ENCODE measurements at regions of chr3 and their contacts with region 1.

Region 1: GRCh38 chr3:179322286-179323196 is at the start of gene ZNF639:
- DNase-seq: peak; percentile 73 to 95 (median 80)
- ATAC-seq: peak; percentile 84
- H3K4me3 ChIP-seq: peak within 1 kb of the TSS; percentile 72
- H3K4me3 Mint-ChIP-seq: peak within 1 kb of the TSS; percentile 92
- H3K27ac ChIP-seq: peak within 1 kb of the TSS; percentile 76 to 97
- H3K27ac Mint-ChIP-seq: peak within 1 kb of the TSS; percentile 98
- H3K4me1 ChIP-seq: peaks cover 25% of the 10 kb centered on the region
- H3K4me1 Mint-ChIP-seq: peaks cover 37% of the 10 kb centered on the region
- H3K27me3 ChIP-seq: no peaks in the 10 kb centered on the region
- H3K27me3 Mint-ChIP-seq: no peaks in the 10 kb centered on the region
- CTCF ChIP-seq: peak; percentile 73
- total RNA-seq, gene ZNF639: 88.1 to 90.8 TPM

Region 2: GRCh38 chr3:178436773-178437172 is 885.8 kb before region 1 on chr3:
- CTCF ChIA-PET with region 1: no interaction called
- POLR2A ChIA-PET with region 1: no interaction called
- intact Hi-C with region 1: loop called (anchors 2 to 5 kb)
- DNase-seq: peak in 3 of 14 experiments; percentile 9 to 14 (median 13)
- ATAC-seq: no peak
- H3K4me3 ChIP-seq: no peak overlapping the region
- H3K4me3 Mint-ChIP-seq: no peak overlapping the region
- H3K27ac ChIP-seq: no peak overlapping the region
- H3K27ac Mint-ChIP-seq: no peak overlapping the region
- H3K4me1 ChIP-seq: no peaks in the 10 kb centered on the region
- H3K4me1 Mint-ChIP-seq: no peaks in the 10 kb centered on the region
- H3K27me3 ChIP-seq: no peaks in the 10 kb centered on the region
- H3K27me3 Mint-ChIP-seq: peaks cover 4% of the 10 kb centered on the region
- CTCF ChIP-seq: peak; percentile 47

Region 3: GRCh38 chr3:179037351-179037750 is 285.2 kb before region 1 on chr3:
- CTCF ChIA-PET with region 1: no interaction called
- POLR2A ChIA-PET with region 1: interaction called, 10 read pairs
- intact Hi-C with region 1: no loop called
- DNase-seq: peak; percentile 27 to 78 (median 55)
- ATAC-seq: peak; percentile 95
- H3K4me3 ChIP-seq: peak overlapping the region; percentile 28
- H3K4me3 Mint-ChIP-seq: peak overlapping the region; percentile 73
- H3K27ac ChIP-seq: peak overlapping the region; percentile 47 to 63
- H3K27ac Mint-ChIP-seq: no peak overlapping the region
- H3K4me1 ChIP-seq: peaks cover 28% of the 10 kb centered on the region
- H3K4me1 Mint-ChIP-seq: peaks cover 12% of the 10 kb centered on the region
- H3K27me3 ChIP-seq: no peaks in the 10 kb centered on the region
- H3K27me3 Mint-ChIP-seq: no peaks in the 10 kb centered on the region
- CTCF ChIP-seq: no peak

Region 4: GRCh38 chr3:179299999-179300613 is 22.4 kb before region 1 on chr3:
- CTCF ChIA-PET with region 1: no interaction called
- POLR2A ChIA-PET with region 1: no interaction called
- intact Hi-C with region 1: no loop called
- DNase-seq: no peak
- ATAC-seq: no peak
- H3K4me3 ChIP-seq: no peak overlapping the region
- H3K4me3 Mint-ChIP-seq: no peak overlapping the region
- H3K27ac ChIP-seq: no peak overlapping the region
- H3K27ac Mint-ChIP-seq: no peak overlapping the region
- H3K4me1 ChIP-seq: no peaks in the 10 kb centered on the region
- H3K4me1 Mint-ChIP-seq: no peaks in the 10 kb centered on the region
- H3K27me3 ChIP-seq: no peaks in the 10 kb centered on the region
- H3K27me3 Mint-ChIP-seq: peaks cover under 1% of the 10 kb centered on the region
- CTCF ChIP-seq: no peak

Region 5: DNA sequence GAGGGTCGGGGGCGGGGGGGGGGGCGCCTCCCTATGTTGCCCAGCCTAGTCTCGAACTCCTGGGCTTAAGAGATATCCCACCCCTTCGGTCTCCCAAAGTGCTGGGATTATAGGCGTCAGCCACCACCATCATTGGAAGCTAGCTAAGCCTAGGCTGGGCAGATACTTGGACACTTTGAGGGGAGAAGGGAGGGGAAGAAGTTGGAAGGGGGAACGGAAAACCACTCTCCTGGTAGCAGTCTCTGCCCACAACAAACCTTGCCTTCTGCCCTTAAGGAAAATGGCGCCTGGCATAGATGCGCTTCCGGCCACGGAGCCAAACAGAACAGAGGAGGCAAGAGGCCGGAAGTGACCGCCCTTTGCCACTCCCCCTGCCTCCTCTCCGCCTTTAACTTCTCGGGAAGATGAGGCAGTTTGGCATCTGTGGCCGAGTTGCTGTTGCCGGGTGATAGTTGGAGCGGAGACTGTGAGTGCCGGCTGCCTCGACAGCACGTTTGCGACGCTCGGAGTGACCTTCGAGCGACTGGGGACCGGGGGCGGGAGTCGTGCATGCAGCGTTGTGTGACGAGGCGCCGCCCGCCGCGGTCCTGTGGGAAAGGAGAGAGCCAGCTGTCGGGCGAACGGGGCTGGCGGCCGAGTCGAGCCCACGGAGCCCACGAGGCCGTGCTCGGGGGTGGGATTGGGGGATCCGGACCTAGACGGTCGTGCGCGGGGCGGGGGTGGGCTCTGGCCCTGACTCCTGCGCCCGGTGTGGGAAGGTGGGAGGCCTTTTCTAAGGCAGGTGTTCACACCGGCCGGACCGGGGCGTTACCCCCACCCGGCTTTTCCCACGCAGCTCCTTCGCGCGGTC is 25.0 kb after region 1 on chr3 and contains the start of gene MFN1:
- CTCF ChIA-PET with region 1: interaction called, 3 read pairs
- POLR2A ChIA-PET with region 1: interaction called, 51 read pairs
- intact Hi-C with region 1: loop called (anchors 1 to 2 kb)
- DNase-seq: peak; percentile 72 to 95 (median 84)
- ATAC-seq: peak; percentile 99
- H3K4me3 ChIP-seq: peak within 1 kb of the TSS; percentile 86
- H3K4me3 Mint-ChIP-seq: peak within 1 kb of the TSS; percentile 99
- H3K27ac ChIP-seq: peak within 1 kb of the TSS; percentile 63 to 74
- H3K27ac Mint-ChIP-seq: peak within 1 kb of the TSS; percentile 90
- H3K4me1 ChIP-seq: peaks cover 19% of the 10 kb centered on the region
- H3K4me1 Mint-ChIP-seq: peaks cover 28% of the 10 kb centered on the region
- H3K27me3 ChIP-seq: no peaks in the 10 kb centered on the region
- H3K27me3 Mint-ChIP-seq: no peaks in the 10 kb centered on the region
- CTCF ChIP-seq: no peak
- total RNA-seq, gene MFN1: 20.7 to 26.1 TPM

Region 6: GRCh38 chr3:179604321-179605078 is 282.0 kb after region 1 on chr3 and contains the starts of genes MRPL47 and NDUFB5:
- CTCF ChIA-PET with region 1: no interaction called
- POLR2A ChIA-PET with region 1: interaction called, 4 read pairs
- intact Hi-C with region 1: loop called in 1 of 2 experiments (anchors 2 kb)
- DNase-seq: peak; percentile 84 to 98 (median 89)
- ATAC-seq: peak; percentile 99
- H3K4me3 ChIP-seq: peak within 1 kb of the TSS; percentile 80
- H3K4me3 Mint-ChIP-seq: peak within 1 kb of the TSS; percentile 91
- H3K27ac ChIP-seq: peak within 1 kb of the TSS; percentile 90 to 91
- H3K27ac Mint-ChIP-seq: peak within 1 kb of the TSS; percentile 95
- H3K4me1 ChIP-seq: peaks cover 21% of the 10 kb centered on the region
- H3K4me1 Mint-ChIP-seq: peaks cover 56% of the 10 kb centered on the region
- H3K27me3 ChIP-seq: no peaks in the 10 kb centered on the region
- H3K27me3 Mint-ChIP-seq: no peaks in the 10 kb centered on the region
- CTCF ChIP-seq: no peak
- total RNA-seq, gene MRPL47: 24.8 to 28.6 TPM
- total RNA-seq, gene NDUFB5: 20.3 to 24.2 TPM